ENCODE measurements at regions of chr1 and their contacts with region 1.

Region 1: DNA sequence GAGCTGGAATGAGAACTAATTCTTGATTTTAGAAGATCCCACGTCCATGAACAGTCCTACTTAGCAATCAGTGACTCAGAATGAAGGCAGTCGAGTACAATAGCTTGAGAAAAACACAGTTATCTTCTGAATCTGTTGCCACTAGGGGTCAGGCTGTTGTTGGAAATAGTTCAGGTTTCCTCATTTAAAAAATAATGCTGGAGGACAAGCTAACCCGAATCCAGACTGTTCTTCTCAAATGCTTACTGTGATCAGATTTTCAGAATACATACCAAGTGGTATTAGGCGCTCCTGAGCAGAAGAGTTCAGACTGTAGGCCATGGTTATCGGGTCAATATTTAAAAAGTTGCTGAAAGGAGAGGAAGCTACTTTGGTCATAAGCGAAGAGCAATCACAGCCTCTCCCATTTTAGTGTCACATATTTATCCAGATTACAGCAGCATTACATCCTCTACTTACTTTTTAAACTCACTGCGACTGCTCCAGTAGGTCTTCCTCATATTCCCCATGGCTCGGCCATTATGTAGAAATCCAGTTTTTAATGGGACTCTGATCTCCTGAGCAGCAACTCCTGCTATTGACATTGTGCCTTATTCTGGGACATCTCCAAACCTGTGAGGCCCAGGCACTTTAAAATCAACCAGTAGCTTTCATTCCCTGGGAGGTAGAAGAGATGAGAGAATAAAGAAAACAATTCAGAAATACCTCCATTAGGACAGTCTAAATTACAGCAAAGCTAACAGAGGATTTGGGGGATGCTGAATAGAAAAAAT is 10.9 kb downstream of the ERRFI1 start:
- DNase-seq: peak; percentile 56
- H3K4me3 Mint-ChIP-seq: no peak overlapping the region
- H3K27ac Mint-ChIP-seq: no peak overlapping the region
- H3K4me1 Mint-ChIP-seq: no peaks in the 10 kb centered on the region
- H3K27me3 Mint-ChIP-seq: peaks cover 9% of the 10 kb centered on the region

Region 2: GRCh38 chr1:7983086-7983778 is 32.0 kb before region 1 on chr1:
- CTCF ChIA-PET with region 1: interaction called, 28 read pairs
- DNase-seq: no peak
- H3K4me3 Mint-ChIP-seq: no peak overlapping the region
- H3K27ac Mint-ChIP-seq: no peak overlapping the region
- H3K4me1 Mint-ChIP-seq: peaks cover 4% of the 10 kb centered on the region
- H3K27me3 Mint-ChIP-seq: no peaks in the 10 kb centered on the region

Region 3: GRCh38 chr1:8026153-8026975 is 11.1 kb after region 1 on chr1 and contains the start of gene ERRFI1:
- CTCF ChIA-PET with region 1: interaction called, 20 read pairs
- DNase-seq: peak; percentile 88
- H3K4me3 Mint-ChIP-seq: peak within 1 kb of the TSS; percentile 63
- H3K27ac Mint-ChIP-seq: no peak within 1 kb of the TSS
- H3K4me1 Mint-ChIP-seq: peaks cover 13% of the 10 kb centered on the region
- H3K27me3 Mint-ChIP-seq: peaks cover 65% of the 10 kb centered on the region

Region 4: GRCh38 chr1:8314346-8315280 is 299.4 kb after region 1 on chr1:
- CTCF ChIA-PET with region 1: interaction called, 105 read pairs
- DNase-seq: peak; percentile 66
- H3K4me3 Mint-ChIP-seq: no peak overlapping the region
- H3K27ac Mint-ChIP-seq: no peak overlapping the region
- H3K4me1 Mint-ChIP-seq: peaks cover 24% of the 10 kb centered on the region
- H3K27me3 Mint-ChIP-seq: peaks cover 59% of the 10 kb centered on the region

Region 5: GRCh38 chr1:8348777-8349491 is 333.7 kb after region 1 on chr1:
- CTCF ChIA-PET with region 1: interaction called, 36 read pairs
- DNase-seq: peak; percentile 78
- H3K4me3 Mint-ChIP-seq: no peak overlapping the region
- H3K27ac Mint-ChIP-seq: no peak overlapping the region
- H3K4me1 Mint-ChIP-seq: no peaks in the 10 kb centered on the region
- H3K27me3 Mint-ChIP-seq: peaks cover 13% of the 10 kb centered on the region

Measured in activated naive CD4-positive, alpha-beta T cell treated with anti-CD3 and anti-CD28 coated beads, Interleukin-2, amount 10 ng/mL, durations not matched to agents 7 days and 5 days (primary cell).